ENCODE measurements at regions of chr19 and their contacts with region 1.

Region 1: DNA sequence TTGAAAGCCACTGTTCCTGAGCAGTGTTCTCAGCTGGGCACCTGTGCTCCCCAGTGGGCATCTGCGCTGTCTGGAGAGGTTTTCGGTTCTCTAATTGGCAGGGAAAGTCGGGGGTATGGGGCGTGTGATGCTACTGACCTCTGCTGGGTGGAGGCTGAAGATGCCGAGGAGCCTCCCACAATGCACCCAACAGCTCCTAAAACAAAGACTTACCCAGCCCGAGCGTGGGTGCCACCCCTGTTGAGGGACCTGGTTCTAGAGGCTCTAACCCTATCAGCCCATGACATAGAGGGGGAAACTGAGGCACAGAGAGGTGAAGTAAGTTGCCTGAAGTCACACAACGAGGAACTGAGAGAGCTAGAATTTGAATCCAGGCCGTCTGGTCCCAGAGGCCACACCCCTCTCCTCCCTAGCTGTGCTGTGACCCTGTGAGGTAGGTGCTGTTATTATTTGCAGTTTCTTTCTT is 2.3 kb downstream of the SPACA4 start:
- DNase-seq: peak; percentile 73
- H3K4me3 Mint-ChIP-seq: no peak overlapping the region
- H3K27ac Mint-ChIP-seq: no peak overlapping the region
- H3K4me1 Mint-ChIP-seq: no peaks in the 10 kb centered on the region
- H3K27me3 Mint-ChIP-seq: no peaks in the 10 kb centered on the region

Region 2: DNA sequence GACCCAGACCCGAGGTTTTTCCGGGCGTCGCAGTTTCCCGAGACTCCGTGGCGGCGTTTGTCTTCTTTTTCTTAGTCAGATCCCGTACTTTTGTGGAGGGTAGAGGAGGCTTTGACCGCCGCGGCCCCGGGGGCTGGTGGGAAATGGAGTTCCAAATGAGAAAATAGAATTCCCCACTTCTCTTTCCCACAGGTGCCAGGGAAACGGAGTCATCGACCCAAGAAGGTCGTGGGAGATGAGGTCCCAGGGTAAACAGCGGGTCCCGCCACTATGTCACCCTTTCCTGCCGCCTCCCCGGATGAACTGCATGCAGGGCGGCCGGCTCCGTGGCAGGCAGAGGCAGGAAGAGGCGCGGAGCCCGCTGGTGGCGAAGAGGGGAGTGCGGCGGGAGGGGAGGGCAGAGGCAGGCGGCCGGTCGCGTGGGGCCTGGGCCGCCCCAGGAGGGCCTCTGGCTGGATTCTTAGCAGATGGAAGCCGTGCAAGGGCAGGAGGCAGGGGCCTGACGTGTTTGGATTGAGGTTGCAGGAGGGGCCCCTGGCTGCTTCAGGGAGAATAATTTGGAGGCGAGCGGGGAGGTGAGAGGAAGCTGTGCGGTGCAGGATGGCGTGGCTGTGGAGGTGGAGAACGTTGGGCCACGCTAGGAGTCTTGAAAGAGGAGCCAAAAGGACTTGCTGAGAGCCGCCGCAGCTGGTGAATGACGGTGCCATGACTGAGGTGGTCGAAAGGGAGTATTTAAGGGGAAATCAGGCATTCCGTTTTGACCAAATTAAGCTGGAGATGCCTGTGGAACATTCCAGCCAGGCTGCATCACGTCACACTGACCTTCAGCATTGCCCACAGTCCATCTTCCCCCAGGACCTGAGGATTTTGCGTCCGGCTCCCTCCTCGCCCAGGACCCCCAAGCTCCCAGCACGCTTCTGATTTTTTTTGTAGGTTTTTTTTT is 128.0 kb before region 1 on chr19:
- CTCF ChIA-PET with region 1: interaction called, 3 read pairs
- POLR2A ChIA-PET with region 1: no interaction called
- intact Hi-C with region 1: loop called (anchors 5 kb)
- DNase-seq: peak; percentile 69
- H3K4me3 Mint-ChIP-seq: peak overlapping the region; percentile 73
- H3K27ac Mint-ChIP-seq: peak overlapping the region; percentile 70
- H3K4me1 Mint-ChIP-seq: peaks cover 14% of the 10 kb centered on the region
- H3K27me3 Mint-ChIP-seq: no peaks in the 10 kb centered on the region

Region 3: GRCh38 chr19:48501496-48502350 is 107.1 kb before region 1 on chr19:
- CTCF ChIA-PET with region 1: interaction called, 48 read pairs
- POLR2A ChIA-PET with region 1: no interaction called
- intact Hi-C with region 1: no loop called
- DNase-seq: peak; percentile 85
- H3K4me3 Mint-ChIP-seq: peak overlapping the region; percentile 62
- H3K27ac Mint-ChIP-seq: peak overlapping the region; percentile 65
- H3K4me1 Mint-ChIP-seq: peaks cover 13% of the 10 kb centered on the region
- H3K27me3 Mint-ChIP-seq: peaks cover 17% of the 10 kb centered on the region

Region 4: GRCh38 chr19:48553676-48554386 is 55.0 kb before region 1 on chr19:
- CTCF ChIA-PET with region 1: no interaction called
- POLR2A ChIA-PET with region 1: no interaction called
- intact Hi-C with region 1: no loop called
- DNase-seq: no peak
- H3K4me3 Mint-ChIP-seq: no peak overlapping the region
- H3K27ac Mint-ChIP-seq: no peak overlapping the region
- H3K4me1 Mint-ChIP-seq: no peaks in the 10 kb centered on the region
- H3K27me3 Mint-ChIP-seq: peaks cover 2% of the 10 kb centered on the region

Measured in activated CD4-positive, alpha-beta memory T cell treated with anti-CD3 and anti-CD28 coated beads for 36 hours (primary cell).